ENCODE measurements at regions of chr13 and their contacts with region 1.

Region 1: DNA sequence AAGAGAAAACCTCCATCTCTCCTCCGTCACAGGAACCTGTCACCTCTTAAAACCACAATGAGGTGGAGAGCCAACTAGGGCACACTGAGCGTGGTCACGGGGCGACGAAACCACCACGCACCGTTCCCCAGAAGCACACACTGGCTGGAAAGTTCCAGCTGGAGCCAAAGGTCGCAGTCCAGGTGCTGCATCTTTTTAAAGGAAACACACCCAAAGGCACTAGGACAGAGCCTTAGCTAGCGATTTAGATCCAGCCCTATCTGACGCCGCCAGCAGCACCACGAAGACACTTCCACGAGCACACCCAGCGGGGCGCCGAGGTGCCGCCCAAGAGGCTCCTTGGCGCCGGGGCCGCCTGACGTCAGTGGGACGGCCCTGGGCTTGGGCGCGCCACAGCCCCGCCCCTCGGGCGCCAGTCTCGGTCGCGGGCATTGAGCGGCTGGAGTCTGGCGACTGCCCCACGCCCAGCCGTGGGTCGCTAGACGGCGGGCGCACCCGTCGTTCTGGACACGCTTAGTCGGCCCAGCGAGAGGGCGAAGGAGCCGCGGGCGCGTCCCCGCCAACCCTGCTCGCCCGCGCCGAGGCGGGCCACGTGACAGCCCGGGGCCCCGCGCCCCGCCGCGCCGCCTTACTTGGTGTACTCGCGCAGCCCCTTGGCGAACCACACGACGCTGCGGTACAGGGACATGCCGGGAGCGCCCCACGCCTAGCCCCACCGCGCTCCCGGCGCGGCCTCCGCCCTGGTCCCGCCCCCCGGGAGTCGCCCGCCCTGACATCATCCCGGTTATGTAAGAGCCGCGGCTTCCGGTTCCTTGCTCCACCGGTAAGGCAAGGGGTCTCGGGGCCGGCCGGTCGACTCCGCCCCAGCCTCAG is at the start of gene DHRS12:
- DNase-seq: peak; percentile 92
- H3K4me3 ChIP-seq: peak within 1 kb of the TSS; percentile 83 to 96
- H3K27ac ChIP-seq: peak within 1 kb of the TSS; percentile 99
- H3K4me1 ChIP-seq: peaks cover 18% of the 10 kb centered on the region
- H3K27me3 ChIP-seq: no peaks in the 10 kb centered on the region
- CTCF ChIP-seq: peak in 2 of 4 experiments; percentile 21 to 35
- POLR2A ChIP-seq: peak; percentile 79
- total RNA-seq, gene DHRS12: 18.7 to 19.8 TPM

Region 2: DNA sequence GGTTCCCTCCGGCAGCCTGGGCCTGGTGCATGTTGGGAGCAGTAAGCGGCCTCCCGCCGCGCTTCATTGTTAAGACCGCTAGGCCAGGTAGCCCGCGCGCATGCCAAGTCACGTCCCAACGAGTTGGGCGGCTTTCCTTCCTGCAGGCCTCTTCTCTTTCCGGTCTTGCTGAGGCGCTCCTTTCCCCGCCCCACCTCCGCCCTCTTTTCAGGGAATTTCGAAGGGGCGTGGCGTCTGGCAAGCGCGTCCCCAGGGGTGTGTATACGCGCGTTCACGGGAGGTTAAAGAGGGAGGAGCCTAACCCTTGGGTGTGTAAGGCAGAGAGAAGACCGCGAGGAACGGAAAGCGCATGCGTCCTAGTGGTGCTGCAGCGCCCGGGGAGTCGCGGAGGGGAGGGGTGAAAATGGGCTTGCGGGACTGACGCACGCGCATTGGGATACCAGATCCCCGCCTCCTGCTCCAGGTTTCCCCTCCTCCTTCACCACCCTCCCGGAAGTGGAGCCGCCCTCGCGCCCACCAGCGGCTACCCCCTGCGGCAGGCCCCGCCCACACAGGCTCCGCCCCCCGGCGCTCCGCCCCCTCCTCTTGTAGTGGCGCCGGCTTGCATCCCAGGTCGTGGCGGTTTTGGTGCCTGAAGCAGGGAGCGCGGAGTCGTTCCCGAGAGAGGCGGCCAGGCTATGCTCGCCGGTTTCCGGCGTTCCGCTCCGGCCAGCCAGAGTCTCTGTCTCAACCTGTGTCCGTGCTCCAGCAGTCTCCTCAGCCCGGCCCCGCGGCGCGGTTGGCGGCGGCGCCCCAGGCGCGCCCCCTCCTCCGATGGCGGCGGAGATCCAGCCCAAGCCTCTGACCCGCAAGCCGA is 219.6 kb before region 1 on chr13 and contains the start of gene WDFY2:
- intact Hi-C with region 1: loop called (anchors 2 kb)
- DNase-seq: peak; percentile 100
- H3K4me3 ChIP-seq: peak within 1 kb of the TSS; percentile 83 to 90
- H3K27ac ChIP-seq: peak within 1 kb of the TSS; percentile 91 to 92
- H3K4me1 ChIP-seq: no peaks in the 10 kb centered on the region
- H3K27me3 ChIP-seq: no peaks in the 10 kb centered on the region
- CTCF ChIP-seq: peak in 2 of 4 experiments; percentile 25 to 34
- POLR2A ChIP-seq: peak; percentile 97
- total RNA-seq, gene WDFY2: 7.9 to 23.2 TPM

Measured in prostate gland (tissue), 2 donors.